IMR-90 (cell line): ENCODE measurements at regions of chr7 and their contacts with region 1.

Region 1: DNA sequence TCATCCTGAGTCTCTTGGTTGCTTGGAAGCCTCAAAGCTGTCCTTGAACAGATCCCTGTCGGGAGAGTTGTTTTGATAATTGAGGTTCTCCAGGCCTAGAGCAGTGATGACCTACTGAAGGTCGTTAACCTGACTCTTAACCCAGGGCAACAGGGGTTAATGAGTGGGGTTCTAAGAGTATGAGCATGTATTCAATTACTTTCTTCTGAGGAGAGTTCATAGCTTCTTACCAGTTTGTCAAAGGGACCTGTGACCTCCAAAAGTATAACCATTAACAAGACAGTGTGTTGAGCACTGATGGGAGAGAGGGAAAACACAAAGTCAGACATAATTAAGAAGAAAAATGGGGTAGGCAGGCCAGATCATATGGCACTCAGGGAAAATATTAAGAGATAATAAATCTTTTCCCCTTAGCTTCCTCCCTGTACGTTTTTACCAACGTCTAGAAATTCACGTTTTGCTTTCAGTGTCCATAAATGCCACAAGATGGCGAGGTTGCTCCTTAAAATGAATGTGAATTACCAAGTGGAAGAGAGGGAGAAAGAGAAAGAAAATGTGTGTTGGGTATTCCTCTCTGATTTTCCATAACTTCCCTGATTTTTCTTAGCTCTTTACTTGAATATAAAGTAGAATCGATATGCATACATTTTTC is 97.6 kb downstream of the SUGCT start:
- DNase-seq: peak; percentile 80
- ATAC-seq: peak; percentile 89
- H3K4me3 ChIP-seq: no peak overlapping the region
- H3K27ac ChIP-seq: no peak overlapping the region
- H3K4me1 ChIP-seq: peaks cover 4% of the 10 kb centered on the region; the same call in 1 of the 2 replicates
- H3K27me3 ChIP-seq: no peaks in the 10 kb centered on the region
- CTCF ChIP-seq: peak; percentile 81
- POLR2A ChIP-seq: no peak
- RAD21 ChIP-seq: peak; percentile 84

Region 2: GRCh38 chr7:39616138-39616537 is 616.2 kb before region 1 on chr7:
- CTCF ChIA-PET with region 1: no interaction called
- POLR2A ChIA-PET with region 1: no interaction called
- dilution Hi-C with region 1: no loop called
- in situ Hi-C with region 1: no loop called
- intact Hi-C with region 1: no loop called
- DNase-seq: peak; percentile 63
- ATAC-seq: peak; percentile 58
- H3K4me3 ChIP-seq: no peak overlapping the region
- H3K27ac ChIP-seq: no peak overlapping the region
- H3K4me1 ChIP-seq: peaks cover 5% of the 10 kb centered on the region; the same call in 1 of the 2 replicates
- H3K27me3 ChIP-seq: no peaks in the 10 kb centered on the region
- CTCF ChIP-seq: no peak
- POLR2A ChIP-seq: no peak
- RAD21 ChIP-seq: no peak

Region 3: DNA sequence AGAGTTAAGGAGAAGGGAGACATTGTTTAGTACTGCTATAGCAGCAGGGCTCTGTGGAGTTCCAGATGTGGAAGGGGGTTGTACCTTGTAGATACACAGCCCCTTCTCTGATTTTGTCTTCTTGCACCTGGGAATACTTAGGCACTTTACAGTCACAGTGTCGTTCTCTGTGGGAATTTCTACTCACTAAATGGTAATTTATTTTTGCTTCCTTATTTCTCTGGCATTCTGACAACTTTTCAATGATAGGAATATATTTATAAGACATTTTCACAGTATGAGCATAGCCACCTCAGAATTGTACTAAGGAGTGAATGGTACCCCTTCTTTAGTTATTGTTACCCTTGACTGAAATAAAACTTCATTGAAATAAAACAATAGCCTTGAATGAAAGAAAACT is 35.2 kb after region 1 on chr7:
- CTCF ChIA-PET with region 1: no interaction called
- POLR2A ChIA-PET with region 1: no interaction called
- dilution Hi-C with region 1: no loop called
- in situ Hi-C with region 1: no loop called
- intact Hi-C with region 1: no loop called
- DNase-seq: no peak
- ATAC-seq: no peak
- H3K4me3 ChIP-seq: no peak overlapping the region
- H3K27ac ChIP-seq: no peak overlapping the region
- H3K4me1 ChIP-seq: no peaks in the 10 kb centered on the region
- H3K27me3 ChIP-seq: no peaks in the 10 kb centered on the region
- CTCF ChIP-seq: no peak
- POLR2A ChIP-seq: no peak
- RAD21 ChIP-seq: no peak

Region 4: GRCh38 chr7:40329601-40330153 is 97.3 kb after region 1 on chr7:
- CTCF ChIA-PET with region 1: interaction called, 12 read pairs
- POLR2A ChIA-PET with region 1: no interaction called
- dilution Hi-C with region 1: no loop called
- in situ Hi-C with region 1: no loop called
- intact Hi-C with region 1: loop called (anchors 1 kb)
- DNase-seq: peak; percentile 74
- ATAC-seq: peak; percentile 69
- H3K4me3 ChIP-seq: no peak overlapping the region
- H3K27ac ChIP-seq: no peak overlapping the region
- H3K4me1 ChIP-seq: peaks cover 2% of the 10 kb centered on the region; the same call in 1 of the 2 replicates
- H3K27me3 ChIP-seq: no peaks in the 10 kb centered on the region
- CTCF ChIP-seq: peak; percentile 80
- POLR2A ChIP-seq: no peak
- RAD21 ChIP-seq: peak; percentile 95

Region 5: DNA sequence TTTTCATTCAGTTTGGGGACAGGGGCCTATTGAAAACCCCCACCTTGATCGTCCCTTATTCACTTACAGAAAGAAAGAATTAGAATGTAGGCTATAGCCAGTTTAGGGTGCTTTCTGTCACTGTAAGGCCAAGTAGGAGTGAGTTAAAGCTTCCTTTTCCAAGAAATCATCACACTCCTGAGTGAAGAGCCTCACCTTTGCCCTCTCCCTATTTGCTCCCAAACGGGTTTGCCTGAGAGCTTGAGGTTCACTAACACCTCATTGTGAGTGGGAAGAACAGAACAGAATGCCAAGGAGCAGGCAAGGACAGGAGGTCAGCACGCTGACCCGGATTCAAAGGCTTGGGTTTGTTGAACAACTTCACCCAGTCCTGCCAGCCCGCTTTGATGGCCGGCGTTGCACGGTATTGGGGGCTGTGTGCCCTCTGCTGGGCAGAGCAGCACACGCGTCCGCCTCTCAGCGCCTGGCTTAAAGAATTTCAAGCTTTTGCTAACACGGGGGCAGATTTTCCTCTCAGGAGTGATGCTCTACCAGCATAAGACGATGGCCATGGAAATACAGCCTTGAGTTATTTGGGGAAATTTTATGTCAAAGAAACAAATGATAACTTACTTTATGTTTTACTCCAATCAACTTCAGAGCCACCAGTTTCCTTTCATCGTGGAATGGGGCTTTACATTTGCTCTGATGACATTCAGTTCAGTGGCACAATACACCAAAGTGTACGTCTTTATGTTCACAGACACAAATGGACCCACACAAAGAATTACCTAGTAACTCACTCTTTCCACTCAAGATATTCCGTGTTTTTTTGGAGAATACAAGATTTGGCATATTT is 372.5 kb after region 1 on chr7:
- CTCF ChIA-PET with region 1: no interaction called
- POLR2A ChIA-PET with region 1: no interaction called
- dilution Hi-C with region 1: no loop called
- in situ Hi-C with region 1: loop called (anchors 10 kb)
- intact Hi-C with region 1: loop called (anchors 1 kb)
- DNase-seq: peak; percentile 52
- ATAC-seq: peak; percentile 96
- H3K4me3 ChIP-seq: no peak overlapping the region
- H3K27ac ChIP-seq: no peak overlapping the region
- H3K4me1 ChIP-seq: peaks cover 2% of the 10 kb centered on the region; the same call in 1 of the 2 replicates
- H3K27me3 ChIP-seq: no peaks in the 10 kb centered on the region
- CTCF ChIP-seq: peak; percentile 78
- POLR2A ChIP-seq: no peak
- RAD21 ChIP-seq: peak; percentile 83

Region 6: DNA sequence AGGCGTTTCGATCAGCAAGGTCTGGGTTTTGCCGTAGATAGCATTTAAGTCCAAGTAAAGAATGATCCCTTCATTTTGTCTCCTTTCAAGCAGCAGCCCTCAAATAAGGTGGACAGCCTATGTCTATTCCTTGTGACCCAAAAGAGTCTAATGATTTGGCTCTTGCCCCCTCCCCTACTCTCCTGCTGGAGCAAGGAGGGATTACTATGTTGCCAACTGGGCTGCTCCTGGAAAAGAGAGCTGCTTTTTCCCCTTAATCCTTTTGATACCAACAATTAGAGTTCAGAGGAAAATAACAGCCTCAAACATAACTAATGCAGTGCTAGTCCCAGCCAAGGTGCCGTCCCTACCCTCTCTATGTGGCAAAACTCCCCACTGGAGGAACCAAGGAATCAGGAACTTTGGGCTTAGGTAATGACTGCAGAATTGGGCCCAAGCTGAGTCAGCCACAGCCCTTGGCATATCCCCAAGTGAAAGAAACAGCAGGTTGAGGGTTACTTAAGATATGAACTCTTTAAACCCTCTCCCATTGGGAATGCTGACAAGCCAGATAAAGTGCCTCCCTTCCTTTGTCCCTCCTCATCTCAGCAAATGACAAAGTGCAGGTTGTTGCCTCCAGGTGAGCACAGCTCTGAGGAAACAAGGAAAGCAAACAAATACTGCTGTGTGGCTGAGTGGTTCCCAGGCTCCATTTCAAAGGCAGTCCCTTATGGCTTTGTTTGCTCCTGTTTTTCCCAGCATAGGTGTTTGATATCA is 826.8 kb after region 1 on chr7:
- CTCF ChIA-PET with region 1: no interaction called
- POLR2A ChIA-PET with region 1: no interaction called
- dilution Hi-C with region 1: no loop called
- in situ Hi-C with region 1: no loop called
- intact Hi-C with region 1: loop called (anchors 10 kb)
- DNase-seq: peak; percentile 51
- ATAC-seq: no peak
- H3K4me3 ChIP-seq: no peak overlapping the region
- H3K27ac ChIP-seq: no peak overlapping the region
- H3K4me1 ChIP-seq: peaks cover 5% of the 10 kb centered on the region
- H3K27me3 ChIP-seq: no peaks in the 10 kb centered on the region
- CTCF ChIP-seq: no peak
- POLR2A ChIP-seq: no peak
- RAD21 ChIP-seq: no peak

Region 7: DNA sequence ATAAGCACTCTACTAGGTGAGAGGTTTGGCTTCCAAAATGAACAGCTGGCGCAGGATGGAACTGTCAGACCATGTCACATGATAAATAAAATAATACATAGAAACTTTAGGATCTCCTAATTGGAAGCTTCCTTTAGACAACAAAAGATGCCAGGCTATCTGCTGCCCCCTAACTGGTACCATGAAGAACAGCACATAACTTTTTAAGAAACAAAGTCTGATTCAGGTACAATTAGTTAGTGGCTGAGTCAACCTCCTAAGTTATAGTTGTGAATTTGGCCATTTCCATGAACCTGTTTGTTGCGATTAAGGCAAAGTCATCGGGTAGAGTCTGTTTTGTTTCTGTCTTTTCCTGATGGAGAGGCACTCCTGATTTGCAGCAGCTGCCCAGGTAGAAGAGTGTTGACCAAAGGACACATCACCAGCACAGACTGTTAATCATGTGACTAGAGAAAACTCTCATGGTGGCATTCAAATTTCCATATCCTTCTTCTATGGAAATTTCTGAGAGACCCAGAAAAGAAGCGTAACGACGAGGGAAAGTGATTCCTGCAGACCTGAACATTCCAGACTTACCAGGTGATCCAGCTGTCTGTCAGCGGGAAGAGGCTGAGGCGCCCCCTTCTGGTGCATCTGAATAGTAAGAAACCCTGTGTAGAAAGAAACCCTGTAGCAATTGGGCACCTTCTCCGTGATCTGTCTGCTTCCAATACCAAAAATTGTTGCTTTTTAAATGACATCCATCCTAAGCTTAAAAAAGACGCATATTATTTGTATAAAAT is 1479.1 kb after region 1 on chr7:
- CTCF ChIA-PET with region 1: interaction called, 3 read pairs
- POLR2A ChIA-PET with region 1: no interaction called
- dilution Hi-C with region 1: no loop called
- in situ Hi-C with region 1: loop called (anchors 10 kb)
- intact Hi-C with region 1: no loop called
- DNase-seq: peak; percentile 37
- ATAC-seq: no peak
- H3K4me3 ChIP-seq: no peak overlapping the region
- H3K27ac ChIP-seq: no peak overlapping the region
- H3K4me1 ChIP-seq: peaks cover 11% of the 10 kb centered on the region
- H3K27me3 ChIP-seq: no peaks in the 10 kb centered on the region
- CTCF ChIP-seq: peak; percentile 45
- POLR2A ChIP-seq: no peak
- RAD21 ChIP-seq: peak; percentile 38

Region 8: DNA sequence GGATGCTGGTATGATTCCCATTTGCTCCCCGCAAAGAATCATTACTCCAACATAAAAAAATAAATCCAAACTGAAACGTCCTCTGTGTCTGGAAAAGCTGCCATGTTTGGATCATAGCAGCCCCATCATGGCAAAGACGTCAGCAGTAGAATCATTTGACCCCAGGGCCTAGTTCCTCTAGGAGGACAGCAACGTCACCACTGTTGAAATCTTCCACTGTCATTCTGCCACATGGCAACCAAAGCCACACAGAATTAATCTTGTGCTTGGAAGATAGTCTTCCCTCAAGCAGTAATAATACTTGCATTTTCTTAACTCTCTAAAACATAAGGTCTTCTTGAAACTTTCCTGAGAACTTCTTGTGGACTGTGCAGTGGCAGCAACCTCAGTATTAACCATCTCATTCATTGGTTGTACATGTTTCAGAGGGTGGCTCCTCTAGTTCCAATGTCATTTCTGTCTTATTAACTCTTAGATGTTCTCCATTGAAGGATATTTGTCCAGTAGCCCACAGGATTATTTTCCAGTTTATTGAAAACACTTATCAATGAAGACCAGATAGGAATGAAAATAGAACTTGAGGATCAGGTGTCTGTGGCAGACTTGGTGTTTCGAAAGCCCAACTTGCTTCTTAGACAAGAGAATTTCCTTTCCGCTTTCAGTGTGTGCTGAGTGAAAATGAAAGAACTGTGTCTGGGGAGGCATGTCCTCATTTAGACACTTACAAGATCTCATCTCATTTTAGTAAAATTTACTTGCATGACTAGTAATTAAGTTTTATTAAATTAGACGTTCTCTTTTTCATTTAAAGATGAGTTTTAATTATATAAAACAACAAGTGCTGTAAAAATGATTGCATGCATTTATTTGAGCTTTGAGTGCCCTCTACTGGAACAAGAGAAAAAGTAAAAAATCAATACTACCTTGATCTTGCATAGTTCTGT is 1499.4 kb after region 1 on chr7:
- CTCF ChIA-PET with region 1: interaction called, 4 read pairs
- POLR2A ChIA-PET with region 1: no interaction called
- dilution Hi-C with region 1: no loop called
- in situ Hi-C with region 1: no loop called
- intact Hi-C with region 1: loop called (anchors 10 kb)
- DNase-seq: peak; percentile 33
- ATAC-seq: no peak
- H3K4me3 ChIP-seq: no peak overlapping the region
- H3K27ac ChIP-seq: no peak overlapping the region
- H3K4me1 ChIP-seq: peaks cover 2% of the 10 kb centered on the region
- H3K27me3 ChIP-seq: no peaks in the 10 kb centered on the region
- CTCF ChIP-seq: peak; percentile 54
- POLR2A ChIP-seq: no peak
- RAD21 ChIP-seq: peak; percentile 61